CD4-positive, alpha-beta T cell (primary cell): ENCODE measurements at regions of chr3 and their contacts with region 1.

Region 1: GRCh38 chr3:156674046-156674910 is at the start of gene TIPARP:
- DNase-seq: peak; percentile 95 to 100 (median 99)
- ATAC-seq: peak; percentile 79
- H3K4me3 ChIP-seq: peak within 1 kb of the TSS; percentile 85
- H3K4me3 Mint-ChIP-seq: peak within 1 kb of the TSS; percentile 93
- H3K27ac ChIP-seq: peak within 1 kb of the TSS; percentile 68 to 93
- H3K27ac Mint-ChIP-seq: peak within 1 kb of the TSS; percentile 96
- H3K4me1 ChIP-seq: peaks cover 23% of the 10 kb centered on the region
- H3K4me1 Mint-ChIP-seq: peaks cover 44% of the 10 kb centered on the region
- H3K27me3 ChIP-seq: no peaks in the 10 kb centered on the region
- H3K27me3 Mint-ChIP-seq: no peaks in the 10 kb centered on the region
- CTCF ChIP-seq: peak; percentile 63
- total RNA-seq, gene TIPARP: 158 to 166 TPM

Region 2: GRCh38 chr3:156151824-156152428 is 522.4 kb before region 1 on chr3:
- CTCF ChIA-PET with region 1: interaction called, 3 read pairs
- POLR2A ChIA-PET with region 1: no interaction called
- intact Hi-C with region 1: loop called (anchors 5 kb)
- DNase-seq: peak; percentile 30 to 72 (median 44)
- ATAC-seq: peak; percentile 66
- H3K4me3 ChIP-seq: no peak overlapping the region
- H3K4me3 Mint-ChIP-seq: no peak overlapping the region
- H3K27ac ChIP-seq: no peak overlapping the region
- H3K27ac Mint-ChIP-seq: no peak overlapping the region
- H3K4me1 ChIP-seq: no peaks in the 10 kb centered on the region
- H3K4me1 Mint-ChIP-seq: no peaks in the 10 kb centered on the region
- H3K27me3 ChIP-seq: no peaks in the 10 kb centered on the region
- H3K27me3 Mint-ChIP-seq: no peaks in the 10 kb centered on the region
- CTCF ChIP-seq: peak; percentile 83

Region 3: GRCh38 chr3:156685198-156685597 is 10.9 kb after region 1 on chr3:
- CTCF ChIA-PET with region 1: interaction called, 4 read pairs
- POLR2A ChIA-PET with region 1: interaction called, 29 read pairs
- intact Hi-C with region 1: loop called in 1 of 2 experiments (anchors 2 kb)
- DNase-seq: peak in 2 of 14 experiments; percentile 35 to 51
- ATAC-seq: no peak
- H3K4me3 ChIP-seq: no peak overlapping the region
- H3K4me3 Mint-ChIP-seq: peak overlapping the region; percentile 43
- H3K27ac ChIP-seq: no peak overlapping the region
- H3K27ac Mint-ChIP-seq: no peak overlapping the region
- H3K4me1 ChIP-seq: peaks cover 27% of the 10 kb centered on the region
- H3K4me1 Mint-ChIP-seq: peaks cover 86% of the 10 kb centered on the region
- H3K27me3 ChIP-seq: no peaks in the 10 kb centered on the region
- H3K27me3 Mint-ChIP-seq: no peaks in the 10 kb centered on the region
- CTCF ChIP-seq: no peak

Region 4: DNA sequence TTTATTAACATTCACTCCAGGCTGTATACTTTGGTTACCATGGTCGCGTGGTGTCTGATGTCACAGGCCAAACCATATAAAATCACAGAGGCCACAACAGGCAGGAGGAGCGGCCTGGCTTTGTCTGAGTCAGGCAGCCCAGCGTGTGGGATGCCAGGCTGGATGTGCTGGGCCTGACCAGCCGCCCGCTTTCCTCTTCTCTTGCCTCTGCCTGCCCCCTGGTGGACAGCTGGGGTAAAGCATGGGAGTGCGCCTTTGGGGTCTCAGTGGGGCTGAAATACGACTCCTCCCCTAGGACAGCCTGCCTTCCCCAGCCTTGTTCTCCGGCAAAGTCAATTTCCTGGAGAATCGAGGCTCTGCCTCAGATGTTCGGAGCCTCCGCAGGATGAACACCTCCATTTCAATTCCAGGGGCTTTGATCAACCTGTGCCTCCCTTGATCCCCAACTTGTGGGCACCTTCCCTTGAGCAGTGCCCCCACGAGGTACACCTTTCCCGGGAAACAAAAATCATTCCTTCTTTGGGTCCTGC is 407.5 kb after region 1 on chr3:
- CTCF ChIA-PET with region 1: interaction called, 13 read pairs
- POLR2A ChIA-PET with region 1: interaction called, 71 read pairs
- intact Hi-C with region 1: loop called (anchors 2 kb)
- DNase-seq: peak; percentile 76 to 93 (median 81)
- ATAC-seq: peak; percentile 93
- H3K4me3 ChIP-seq: no peak overlapping the region
- H3K4me3 Mint-ChIP-seq: no peak overlapping the region
- H3K27ac ChIP-seq: peak overlapping the region in 1 of 2 donors; percentile 25
- H3K27ac Mint-ChIP-seq: peak overlapping the region; percentile 64
- H3K4me1 ChIP-seq: peaks cover 14% of the 10 kb centered on the region
- H3K4me1 Mint-ChIP-seq: peaks cover 17% of the 10 kb centered on the region
- H3K27me3 ChIP-seq: no peaks in the 10 kb centered on the region
- H3K27me3 Mint-ChIP-seq: no peaks in the 10 kb centered on the region
- CTCF ChIP-seq: peak; percentile 98

Region 5: DNA sequence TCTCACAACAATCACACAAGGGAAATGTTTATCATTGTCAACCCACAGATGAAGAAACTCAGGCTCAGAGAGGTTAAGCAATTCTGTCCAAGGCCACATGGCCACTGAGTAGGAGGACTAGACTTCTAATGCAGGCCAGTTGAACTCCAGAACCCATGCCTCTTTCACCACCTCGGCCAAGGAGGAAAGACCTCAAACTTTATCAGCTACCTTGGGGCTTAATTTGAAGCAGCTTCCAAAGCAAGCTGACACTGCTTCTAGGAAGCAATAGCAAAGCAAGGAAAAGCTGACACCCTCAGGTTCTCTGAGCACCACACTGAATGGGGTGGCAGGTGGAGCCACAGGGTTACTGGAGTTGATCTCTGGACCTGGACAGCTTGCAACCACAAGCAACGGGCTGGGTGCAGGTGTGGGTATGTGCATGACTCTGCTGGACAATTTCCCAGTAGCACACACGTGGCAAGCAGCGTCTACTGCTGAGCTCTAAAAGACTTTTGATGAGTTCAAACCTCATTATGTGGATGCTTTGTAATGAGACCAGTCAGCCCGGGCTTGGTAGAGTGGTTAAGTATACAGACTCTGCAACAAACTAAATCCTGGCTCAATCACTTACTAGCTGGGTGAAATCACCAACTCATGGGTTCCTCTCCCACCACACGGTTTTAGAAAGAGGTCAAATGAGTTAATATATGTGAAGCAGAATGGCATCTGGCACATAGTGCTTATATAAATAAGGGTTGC is 462.5 kb after region 1 on chr3:
- CTCF ChIA-PET with region 1: interaction called, 21 read pairs
- POLR2A ChIA-PET with region 1: interaction called, 17 read pairs
- intact Hi-C with region 1: loop called in 1 of 2 experiments (anchors 2 kb)
- DNase-seq: no peak
- ATAC-seq: peak; percentile 27
- H3K4me3 ChIP-seq: no peak overlapping the region
- H3K4me3 Mint-ChIP-seq: no peak overlapping the region
- H3K27ac ChIP-seq: no peak overlapping the region
- H3K27ac Mint-ChIP-seq: peak overlapping the region; percentile 74
- H3K4me1 ChIP-seq: peaks cover 47% of the 10 kb centered on the region
- H3K4me1 Mint-ChIP-seq: peaks cover 29% of the 10 kb centered on the region
- H3K27me3 ChIP-seq: no peaks in the 10 kb centered on the region
- H3K27me3 Mint-ChIP-seq: no peaks in the 10 kb centered on the region
- CTCF ChIP-seq: no peak